ENCODE measurements at regions of chr13 and their contacts with region 1.

Region 1: DNA sequence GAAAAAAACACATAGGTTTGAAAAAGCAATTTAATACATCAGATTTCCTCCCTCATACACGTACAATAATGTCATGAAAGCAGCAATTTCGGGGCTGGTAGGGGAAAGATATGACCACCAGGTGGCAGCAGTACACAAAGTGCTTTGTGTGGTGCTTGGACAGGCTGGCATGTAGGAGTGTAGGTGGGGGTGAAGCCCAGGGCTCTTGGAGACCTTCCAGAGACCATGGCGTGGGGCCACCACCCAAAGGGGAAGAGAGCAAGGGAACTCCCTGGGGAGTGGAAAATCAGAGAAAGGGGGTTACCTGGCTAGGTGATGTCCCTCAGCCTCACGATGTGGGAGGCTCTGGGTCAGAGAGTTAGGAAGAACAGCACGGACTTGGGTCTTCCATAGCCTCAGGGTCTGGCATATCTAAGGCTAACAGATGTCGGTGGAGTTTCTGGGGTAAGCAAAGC is 11.8 kb upstream of the CCNA1 start:
- DNase-seq: peak; percentile 16 to 65 (median 51)
- ATAC-seq: peak; percentile 48
- H3K4me3 ChIP-seq: no peak overlapping the region
- H3K4me3 Mint-ChIP-seq: no peak overlapping the region
- H3K27ac ChIP-seq: no peak overlapping the region
- H3K27ac Mint-ChIP-seq: no peak overlapping the region
- H3K4me1 ChIP-seq: no peaks in the 10 kb centered on the region
- H3K4me1 Mint-ChIP-seq: no peaks in the 10 kb centered on the region
- H3K27me3 ChIP-seq: peaks cover 0 to 3% of the 10 kb centered on the region in 2 experiments
- H3K27me3 Mint-ChIP-seq: peaks cover 20% of the 10 kb centered on the region
- CTCF ChIP-seq: peak; percentile 68

Region 2: DNA sequence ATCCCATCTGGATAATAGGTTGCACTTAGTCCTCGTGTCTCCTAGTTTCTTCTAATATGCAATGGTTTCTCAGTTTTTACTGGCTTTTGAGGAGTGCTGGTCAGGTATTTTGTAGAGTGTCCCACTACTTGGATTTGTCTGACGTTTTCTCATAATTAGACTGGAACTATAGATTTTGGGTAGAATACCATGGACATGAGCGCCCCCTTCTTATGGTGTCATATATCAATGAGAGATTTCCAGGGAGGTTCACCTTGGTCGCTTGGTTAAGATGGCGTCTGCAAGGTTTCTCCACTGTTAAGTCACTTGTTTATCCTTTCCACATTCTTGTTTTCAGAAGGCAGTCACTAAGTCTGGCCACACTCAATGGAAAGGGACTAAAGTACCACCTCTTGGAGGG is 212.8 kb before region 1 on chr13:
- CTCF ChIA-PET with region 1: no interaction called
- POLR2A ChIA-PET with region 1: no interaction called
- intact Hi-C with region 1: no loop called
- DNase-seq: no peak
- ATAC-seq: no peak
- H3K4me3 ChIP-seq: no peak overlapping the region
- H3K4me3 Mint-ChIP-seq: no peak overlapping the region
- H3K27ac ChIP-seq: no peak overlapping the region
- H3K27ac Mint-ChIP-seq: no peak overlapping the region
- H3K4me1 ChIP-seq: no peaks in the 10 kb centered on the region
- H3K4me1 Mint-ChIP-seq: no peaks in the 10 kb centered on the region
- H3K27me3 ChIP-seq: no peaks in the 10 kb centered on the region
- H3K27me3 Mint-ChIP-seq: no peaks in the 10 kb centered on the region
- CTCF ChIP-seq: no peak

Region 3: DNA sequence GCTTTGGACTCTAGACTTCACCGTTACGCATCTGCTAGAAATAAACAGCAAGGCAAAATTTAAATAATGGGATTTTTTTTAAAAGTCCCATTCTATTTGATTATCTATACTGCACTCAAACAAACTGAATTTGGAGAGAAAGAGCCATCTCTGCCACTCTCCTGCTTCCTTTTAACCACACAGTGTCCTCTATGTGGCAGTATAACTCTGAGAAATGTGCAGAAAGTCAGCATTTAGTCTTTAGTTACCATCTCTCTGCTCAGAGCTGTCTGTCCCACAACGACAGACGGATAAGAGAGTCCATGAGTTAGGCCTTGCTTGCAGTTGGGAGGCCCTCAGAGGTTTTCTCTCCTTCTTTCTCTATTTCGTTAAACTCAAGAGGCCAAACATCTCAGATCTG is 33.1 kb after region 1 on chr13:
- CTCF ChIA-PET with region 1: no interaction called
- POLR2A ChIA-PET with region 1: no interaction called
- intact Hi-C with region 1: no loop called
- DNase-seq: no peak
- ATAC-seq: no peak
- H3K4me3 ChIP-seq: no peak overlapping the region
- H3K4me3 Mint-ChIP-seq: no peak overlapping the region
- H3K27ac ChIP-seq: no peak overlapping the region
- H3K27ac Mint-ChIP-seq: no peak overlapping the region
- H3K4me1 ChIP-seq: no peaks in the 10 kb centered on the region
- H3K4me1 Mint-ChIP-seq: no peaks in the 10 kb centered on the region
- H3K27me3 ChIP-seq: no peaks in the 10 kb centered on the region
- H3K27me3 Mint-ChIP-seq: no peaks in the 10 kb centered on the region
- CTCF ChIP-seq: no peak

Region 4: DNA sequence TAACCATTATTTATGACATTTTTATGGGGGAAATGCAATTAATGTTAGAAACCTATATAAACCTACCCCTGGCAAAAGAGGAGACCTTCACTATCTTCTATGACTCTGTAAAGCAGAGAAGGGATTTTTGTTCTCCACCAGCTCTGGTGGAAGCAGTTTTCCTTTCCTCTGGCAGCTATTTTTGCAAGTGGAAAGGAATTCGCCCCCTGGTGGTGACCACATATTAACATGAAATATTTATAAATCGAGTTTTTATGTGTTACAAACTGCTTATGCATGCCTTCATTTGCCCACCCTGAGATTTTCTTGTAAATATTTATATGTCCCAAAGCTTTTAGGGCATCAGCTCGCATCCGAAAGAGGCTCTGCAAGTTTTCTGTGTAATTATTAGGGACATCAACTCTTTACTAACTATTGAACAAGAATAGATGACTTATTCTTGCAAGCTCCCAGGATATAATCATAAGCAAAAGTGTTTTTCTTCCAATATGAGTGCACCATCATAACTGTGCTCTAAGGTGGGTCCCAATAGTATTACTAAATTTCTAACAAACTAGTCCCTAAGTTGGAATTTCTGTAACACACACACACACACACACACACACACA is 315.8 kb after region 1 on chr13:
- CTCF ChIA-PET with region 1: no interaction called
- POLR2A ChIA-PET with region 1: no interaction called
- intact Hi-C with region 1: loop called (anchors 2 to 10 kb)
- DNase-seq: peak in 5 of 9 experiments; percentile 3 to 50 (median 30)
- ATAC-seq: no peak
- H3K4me3 ChIP-seq: no peak overlapping the region
- H3K4me3 Mint-ChIP-seq: no peak overlapping the region
- H3K27ac ChIP-seq: no peak overlapping the region
- H3K27ac Mint-ChIP-seq: no peak overlapping the region
- H3K4me1 ChIP-seq: no peaks in the 10 kb centered on the region
- H3K4me1 Mint-ChIP-seq: no peaks in the 10 kb centered on the region
- H3K27me3 ChIP-seq: no peaks in the 10 kb centered on the region
- H3K27me3 Mint-ChIP-seq: peaks cover 2% of the 10 kb centered on the region
- CTCF ChIP-seq: peak; percentile 64

Region 5: DNA sequence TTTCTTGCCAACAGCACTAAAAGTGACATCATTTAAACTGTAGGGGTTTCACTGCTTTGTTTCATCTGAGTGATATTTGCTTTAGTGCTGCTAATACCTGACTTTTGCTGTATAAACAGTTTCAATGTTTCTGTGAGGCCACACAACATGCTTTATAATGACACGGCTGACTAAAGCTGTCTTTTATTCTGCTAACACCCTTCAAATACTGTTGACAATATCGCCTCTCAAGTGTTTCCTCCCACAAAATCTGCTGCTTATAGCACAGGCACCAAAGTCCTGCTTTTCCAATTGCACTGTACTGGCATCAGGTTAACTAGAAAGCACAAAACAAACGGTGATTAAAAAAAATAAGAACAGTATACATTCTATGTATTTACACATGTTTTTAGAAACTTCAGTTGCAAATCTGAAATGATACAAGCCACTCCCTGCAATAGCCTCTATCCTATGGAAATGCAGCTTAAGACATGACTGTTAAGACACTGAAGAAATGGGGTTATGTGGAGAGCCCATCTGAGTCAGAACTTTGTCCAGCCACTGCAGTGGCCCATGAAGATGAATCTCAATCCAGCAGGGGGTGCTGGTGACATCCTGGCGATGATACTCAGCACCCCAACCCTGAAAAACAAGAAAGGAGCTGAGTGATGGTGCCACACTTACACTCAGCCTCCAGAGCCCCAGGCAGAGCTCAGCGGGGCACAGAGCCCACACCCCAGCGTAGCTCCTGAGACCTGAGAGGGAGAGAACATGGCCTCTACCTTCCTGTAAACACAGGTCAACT is 427.9 kb after region 1 on chr13:
- CTCF ChIA-PET with region 1: no interaction called
- POLR2A ChIA-PET with region 1: no interaction called
- intact Hi-C with region 1: loop called in 1 of 2 experiments (anchors 10 kb)
- DNase-seq: peak in 2 of 9 experiments; percentile 4 to 5
- ATAC-seq: no peak
- H3K4me3 ChIP-seq: no peak overlapping the region
- H3K4me3 Mint-ChIP-seq: no peak overlapping the region
- H3K27ac ChIP-seq: no peak overlapping the region
- H3K27ac Mint-ChIP-seq: no peak overlapping the region
- H3K4me1 ChIP-seq: no peaks in the 10 kb centered on the region
- H3K4me1 Mint-ChIP-seq: no peaks in the 10 kb centered on the region
- H3K27me3 ChIP-seq: no peaks in the 10 kb centered on the region
- H3K27me3 Mint-ChIP-seq: peaks cover 3% of the 10 kb centered on the region
- CTCF ChIP-seq: no peak

Region 6: GRCh38 chr13:36981156-36981743 is 560.8 kb after region 1 on chr13:
- CTCF ChIA-PET with region 1: interaction called, 3 read pairs
- POLR2A ChIA-PET with region 1: no interaction called
- intact Hi-C with region 1: loop called in 1 of 2 experiments (anchors 5 kb)
- DNase-seq: peak in 1 of 9 experiments; percentile 28
- ATAC-seq: no peak
- H3K4me3 ChIP-seq: no peak overlapping the region
- H3K4me3 Mint-ChIP-seq: no peak overlapping the region
- H3K27ac ChIP-seq: no peak overlapping the region
- H3K27ac Mint-ChIP-seq: no peak overlapping the region
- H3K4me1 ChIP-seq: no peaks in the 10 kb centered on the region
- H3K4me1 Mint-ChIP-seq: peaks cover 2% of the 10 kb centered on the region
- H3K27me3 ChIP-seq: no peaks in the 10 kb centered on the region
- H3K27me3 Mint-ChIP-seq: no peaks in the 10 kb centered on the region
- CTCF ChIP-seq: peak; percentile 37

Region 7: DNA sequence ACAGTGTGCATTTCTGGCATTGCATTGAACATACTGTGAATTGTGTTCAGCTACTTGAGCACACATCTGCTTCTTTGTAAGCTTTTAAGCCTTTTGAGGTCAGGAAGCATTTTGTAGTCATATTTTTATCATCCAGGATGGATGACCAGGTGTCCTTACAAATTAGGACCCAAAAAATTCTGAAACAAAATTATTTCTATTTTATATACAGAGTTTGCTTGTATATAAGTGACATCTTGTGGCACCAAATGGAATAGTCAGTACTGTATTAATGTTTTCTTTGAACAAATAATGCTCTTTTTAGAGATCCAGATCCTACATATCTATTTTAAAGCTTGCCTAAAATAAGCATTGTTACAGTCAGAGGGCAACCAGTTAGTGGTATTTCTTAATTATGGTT is 648.5 kb after region 1 on chr13:
- CTCF ChIA-PET with region 1: no interaction called
- POLR2A ChIA-PET with region 1: no interaction called
- intact Hi-C with region 1: loop called in 1 of 2 experiments (anchors 5 kb)
- DNase-seq: no peak
- ATAC-seq: peak; percentile 48
- H3K4me3 ChIP-seq: no peak overlapping the region
- H3K4me3 Mint-ChIP-seq: no peak overlapping the region
- H3K27ac ChIP-seq: no peak overlapping the region
- H3K27ac Mint-ChIP-seq: no peak overlapping the region
- H3K4me1 ChIP-seq: no peaks in the 10 kb centered on the region
- H3K4me1 Mint-ChIP-seq: no peaks in the 10 kb centered on the region
- H3K27me3 ChIP-seq: no peaks in the 10 kb centered on the region
- H3K27me3 Mint-ChIP-seq: peaks cover 5% of the 10 kb centered on the region
- CTCF ChIP-seq: no peak